MCF 10A (cell line): ENCODE measurements at regions of chr9 and their contacts with region 1.

Region 1: DNA sequence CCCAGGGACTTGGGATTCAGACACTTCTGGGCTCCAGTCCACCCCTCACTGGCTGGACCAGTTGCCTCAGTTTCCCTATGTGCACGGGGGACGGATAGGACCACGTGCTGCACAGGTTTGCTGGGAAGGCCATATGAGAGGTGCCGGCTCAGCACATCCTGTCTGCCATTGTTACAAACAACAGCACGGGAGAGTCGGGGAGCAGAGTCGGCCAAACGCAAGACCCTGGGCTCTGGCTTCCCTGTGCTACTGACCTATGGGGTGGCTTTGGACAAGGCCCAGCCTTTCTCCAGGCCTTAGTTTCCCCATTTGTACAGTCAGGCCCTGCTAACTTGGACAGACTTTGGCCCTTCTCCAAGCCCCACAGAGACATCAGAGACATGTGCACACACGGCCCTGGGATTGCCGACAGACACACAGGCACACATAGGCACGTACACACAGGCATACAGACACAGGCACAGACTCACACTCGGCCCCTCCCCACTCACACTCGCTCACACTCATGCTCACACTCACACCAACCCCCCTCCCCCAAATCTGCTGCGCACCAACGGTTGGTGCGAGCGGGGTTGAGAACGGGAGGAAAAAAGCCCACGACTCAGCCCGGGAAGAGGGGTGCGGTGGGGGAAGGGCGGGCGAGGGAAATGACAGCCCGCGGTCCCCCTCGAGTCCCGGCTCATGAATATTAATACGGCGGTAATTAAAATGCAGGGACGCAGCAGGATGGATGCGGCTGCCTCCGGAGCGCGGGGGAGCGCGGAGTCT is 133.1 kb downstream of the C9orf50 start:
- DNase-seq: peak; percentile 70
- H3K4me3 Mint-ChIP-seq: peak overlapping the region; percentile 69
- H3K27ac Mint-ChIP-seq: peak overlapping the region; percentile 93
- H3K4me1 Mint-ChIP-seq: peaks cover 59% of the 10 kb centered on the region
- H3K27me3 Mint-ChIP-seq: no peaks in the 10 kb centered on the region
- CTCF ChIP-seq: no peak

Region 2: DNA sequence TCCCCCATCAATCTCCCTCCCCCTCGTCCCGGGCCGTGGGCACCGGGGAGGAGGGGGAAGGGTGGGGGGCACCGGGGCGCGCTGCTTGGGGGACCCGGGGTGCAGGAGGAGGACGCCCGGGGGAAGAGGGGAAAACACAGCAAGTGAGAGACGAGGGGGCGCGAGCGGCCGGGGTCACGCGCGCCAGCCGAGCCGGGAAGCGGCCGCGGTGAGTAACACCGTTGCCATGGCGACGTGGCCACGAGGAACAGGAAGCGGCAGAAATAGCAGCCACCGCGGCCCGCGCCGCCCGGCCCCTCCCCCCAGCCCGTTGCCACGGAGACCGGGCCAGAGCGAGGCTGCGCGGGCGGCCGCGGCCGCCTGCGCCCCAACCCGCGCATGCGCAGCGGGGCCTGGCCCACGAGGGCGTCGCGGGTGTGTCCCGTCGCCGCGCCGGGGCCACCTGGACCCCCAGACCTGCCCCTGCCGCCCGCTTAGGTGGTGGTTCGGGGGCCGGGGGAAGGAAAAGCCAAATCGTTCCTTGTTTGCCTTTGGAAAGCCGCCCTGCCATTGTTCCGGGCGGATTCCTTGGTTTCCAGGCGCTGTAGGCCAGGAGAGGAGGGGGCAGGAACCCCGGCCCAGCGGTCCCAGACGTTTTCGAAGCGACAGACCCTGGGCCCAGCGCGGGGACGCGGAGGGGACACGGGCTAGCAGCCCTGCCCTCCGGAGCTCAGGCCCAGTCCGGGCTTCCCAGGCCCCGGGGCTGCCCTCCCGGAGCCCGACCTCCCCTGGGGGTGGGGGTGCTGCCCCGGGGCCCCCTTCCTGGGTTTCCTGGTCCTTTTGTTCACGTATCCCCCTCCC is 74.1 kb before region 1 on chr9:
- CTCF ChIA-PET with region 1: no interaction called
- POLR2A ChIA-PET with region 1: interaction called, 10 read pairs
- intact Hi-C with region 1: loop called (anchors 2 kb)
- DNase-seq: peak; percentile 95
- H3K4me3 Mint-ChIP-seq: peak overlapping the region; percentile 73
- H3K27ac Mint-ChIP-seq: peak overlapping the region; percentile 95
- H3K4me1 Mint-ChIP-seq: no peaks in the 10 kb centered on the region
- H3K27me3 Mint-ChIP-seq: no peaks in the 10 kb centered on the region
- CTCF ChIP-seq: no peak

Region 3: GRCh38 chr9:129610473-129611301 is 122.9 kb after region 1 on chr9:
- CTCF ChIA-PET with region 1: interaction called, 3 read pairs
- POLR2A ChIA-PET with region 1: interaction called, 7 read pairs
- intact Hi-C with region 1: loop called (anchors 5 kb)
- DNase-seq: peak; percentile 66
- H3K4me3 Mint-ChIP-seq: peak overlapping the region; percentile 75
- H3K27ac Mint-ChIP-seq: no peak overlapping the region
- H3K4me1 Mint-ChIP-seq: peaks cover 13% of the 10 kb centered on the region
- H3K27me3 Mint-ChIP-seq: no peaks in the 10 kb centered on the region
- CTCF ChIP-seq: peak; percentile 88

Region 4: DNA sequence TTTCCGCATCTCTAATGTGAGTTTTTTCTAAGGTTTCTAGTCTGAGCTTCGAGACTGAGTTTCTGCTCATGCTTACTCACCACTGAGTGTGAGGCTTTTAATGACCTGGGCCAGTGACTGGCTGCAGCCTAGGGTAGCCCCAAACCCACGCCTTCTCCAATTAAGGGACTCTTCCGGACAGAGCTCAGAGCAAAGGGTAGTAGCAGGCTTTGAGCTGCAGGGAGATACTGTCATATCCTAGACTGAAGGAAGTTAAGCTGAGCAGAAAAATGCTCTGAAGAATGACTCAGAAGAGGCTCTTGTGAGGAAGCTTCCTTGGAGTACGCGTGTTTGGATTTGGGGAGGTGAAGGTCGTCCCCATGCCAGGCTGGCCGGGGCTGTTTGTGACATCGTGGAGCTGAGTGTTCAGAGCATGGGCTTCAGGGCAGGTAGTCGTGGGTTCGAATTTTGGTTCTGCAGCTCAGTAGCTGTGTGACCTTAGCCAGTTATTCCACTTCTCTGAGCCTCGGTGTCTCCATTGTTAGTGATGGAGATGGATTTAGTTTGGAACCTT is 351.0 kb after region 1 on chr9:
- CTCF ChIA-PET with region 1: no interaction called
- POLR2A ChIA-PET with region 1: no interaction called
- intact Hi-C with region 1: no loop called
- DNase-seq: peak; percentile 55
- H3K4me3 Mint-ChIP-seq: no peak overlapping the region
- H3K27ac Mint-ChIP-seq: no peak overlapping the region
- H3K4me1 Mint-ChIP-seq: peaks cover 20% of the 10 kb centered on the region
- H3K27me3 Mint-ChIP-seq: no peaks in the 10 kb centered on the region
- CTCF ChIP-seq: no peak